GM12878 (cell line): ENCODE measurements at regions of chr1 and their contacts with region 1.

Region 1: GRCh38 chr1:160951443-160952128 is 3.0 kb downstream of the ITLN2 start:
- DNase-seq: peak; percentile 40
- ATAC-seq: peak; percentile 95
- H3K4me3 ChIP-seq: no peak overlapping the region
- H3K27ac ChIP-seq: no peak overlapping the region
- H3K4me1 ChIP-seq: no peaks in the 10 kb centered on the region
- H3K27me3 ChIP-seq: no peaks in the 10 kb centered on the region
- CTCF ChIP-seq: peak; percentile 80 to 90 (median 89)
- EP300 ChIP-seq: no peak
- POLR2A ChIP-seq: no peak
- RAD21 ChIP-seq: peak; percentile 89

Region 2: DNA sequence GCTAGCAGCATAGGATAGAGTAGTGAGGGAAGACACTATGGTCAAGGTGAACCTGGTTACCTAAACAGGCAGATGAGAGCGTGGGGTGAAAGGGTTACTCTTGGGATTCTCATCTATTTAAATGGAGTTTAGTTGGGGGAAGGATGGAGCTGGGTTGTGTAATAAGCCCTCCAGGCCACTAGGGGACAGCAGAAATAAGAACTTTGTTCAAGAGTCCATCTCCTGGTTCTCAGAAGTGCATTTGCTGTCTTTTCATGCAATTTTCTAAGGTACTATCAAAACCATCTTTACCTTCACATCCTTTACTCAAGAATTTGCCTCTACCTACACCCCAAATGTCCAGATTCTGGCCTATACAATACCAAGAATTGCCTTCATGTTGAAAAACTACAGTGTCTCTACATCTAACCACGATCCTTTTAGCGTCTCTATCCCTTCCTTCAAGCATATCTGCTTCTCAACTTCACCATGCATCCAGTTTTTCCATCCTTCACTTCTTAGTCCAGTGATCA is 332.8 kb before region 1 on chr1:
- CTCF ChIA-PET with region 1: interaction called, 13 read pairs
- POLR2A ChIA-PET with region 1: interaction called, 7 read pairs
- RAD21 ChIA-PET with region 1: interaction called, 3 read pairs
- SMC1A ChIA-PET with region 1: no interaction called
- in situ Hi-C with region 1: no loop called
- intact Hi-C with region 1: no loop called
- DNase-seq: no peak
- ATAC-seq: peak; percentile 54
- H3K4me3 ChIP-seq: no peak overlapping the region
- H3K27ac ChIP-seq: no peak overlapping the region; the same call in 1 of the 2 replicates
- H3K4me1 ChIP-seq: peaks cover 28% of the 10 kb centered on the region
- H3K27me3 ChIP-seq: no peaks in the 10 kb centered on the region
- CTCF ChIP-seq: peak; percentile 72 to 88 (median 82)
- EP300 ChIP-seq: no peak
- POLR2A ChIP-seq: no peak
- RAD21 ChIP-seq: peak; percentile 75

Region 3: DNA sequence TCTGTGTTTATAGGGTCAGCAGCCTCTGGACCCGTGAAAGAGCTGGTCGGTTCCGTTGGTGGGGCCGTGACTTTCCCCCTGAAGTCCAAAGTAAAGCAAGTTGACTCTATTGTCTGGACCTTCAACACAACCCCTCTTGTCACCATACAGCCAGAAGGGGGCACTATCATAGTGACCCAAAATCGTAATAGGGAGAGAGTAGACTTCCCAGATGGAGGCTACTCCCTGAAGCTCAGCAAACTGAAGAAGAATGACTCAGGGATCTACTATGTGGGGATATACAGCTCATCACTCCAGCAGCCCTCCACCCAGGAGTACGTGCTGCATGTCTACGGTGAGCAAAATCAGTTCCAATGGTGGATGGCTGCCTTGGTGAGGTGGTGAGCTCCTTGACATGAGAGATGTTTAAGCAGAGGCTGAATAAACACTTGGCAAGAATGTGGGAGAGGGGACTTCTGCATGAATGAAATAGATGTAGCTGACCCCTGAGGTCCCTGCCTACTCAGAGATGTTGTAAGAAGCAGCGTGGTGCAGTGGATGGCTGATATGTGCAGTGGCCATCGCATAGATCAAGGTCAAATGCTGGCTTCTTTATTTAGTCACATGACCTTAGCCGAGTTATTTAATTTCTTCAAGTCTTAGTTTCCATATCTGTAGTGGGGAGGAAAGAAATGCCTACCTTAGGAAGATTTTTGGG is 203.3 kb before region 1 on chr1:
- CTCF ChIA-PET with region 1: interaction called, 10 read pairs
- POLR2A ChIA-PET with region 1: no interaction called
- RAD21 ChIA-PET with region 1: interaction called, 5 read pairs
- SMC1A ChIA-PET with region 1: interaction called, 6 read pairs
- in situ Hi-C with region 1: no loop called
- intact Hi-C with region 1: no loop called
- DNase-seq: no peak
- ATAC-seq: no peak
- H3K4me3 ChIP-seq: no peak overlapping the region
- H3K27ac ChIP-seq: no peak overlapping the region
- H3K4me1 ChIP-seq: peaks cover 51% of the 10 kb centered on the region
- H3K27me3 ChIP-seq: no peaks in the 10 kb centered on the region
- CTCF ChIP-seq: peak; percentile 18 to 47 (median 38); a peak in 4 of 6 replicates
- EP300 ChIP-seq: no peak
- POLR2A ChIP-seq: no peak; the same call in 1 of the 2 replicates
- RAD21 ChIP-seq: no peak

Region 4: GRCh38 chr1:160795951-160796383 is 155.6 kb before region 1 on chr1 and contains the start of gene LY9:
- CTCF ChIA-PET with region 1: interaction called, 14 read pairs
- POLR2A ChIA-PET with region 1: no interaction called
- RAD21 ChIA-PET with region 1: interaction called, 24 read pairs
- SMC1A ChIA-PET with region 1: interaction called, 4 read pairs
- in situ Hi-C with region 1: no loop called
- intact Hi-C with region 1: no loop called
- DNase-seq: peak; percentile 97
- ATAC-seq: peak; percentile 79
- H3K4me3 ChIP-seq: peak within 1 kb of the TSS; percentile 63
- H3K27ac ChIP-seq: peak within 1 kb of the TSS; percentile 78
- H3K4me1 ChIP-seq: peaks cover 42% of the 10 kb centered on the region
- H3K27me3 ChIP-seq: no peaks in the 10 kb centered on the region
- CTCF ChIP-seq: no peak
- EP300 ChIP-seq: peak; percentile 96 to 98
- POLR2A ChIP-seq: peak; percentile 66
- RAD21 ChIP-seq: no peak
- polyA plus RNA-seq, gene LY9: 2.7 to 2.8 TPM

Region 5: DNA sequence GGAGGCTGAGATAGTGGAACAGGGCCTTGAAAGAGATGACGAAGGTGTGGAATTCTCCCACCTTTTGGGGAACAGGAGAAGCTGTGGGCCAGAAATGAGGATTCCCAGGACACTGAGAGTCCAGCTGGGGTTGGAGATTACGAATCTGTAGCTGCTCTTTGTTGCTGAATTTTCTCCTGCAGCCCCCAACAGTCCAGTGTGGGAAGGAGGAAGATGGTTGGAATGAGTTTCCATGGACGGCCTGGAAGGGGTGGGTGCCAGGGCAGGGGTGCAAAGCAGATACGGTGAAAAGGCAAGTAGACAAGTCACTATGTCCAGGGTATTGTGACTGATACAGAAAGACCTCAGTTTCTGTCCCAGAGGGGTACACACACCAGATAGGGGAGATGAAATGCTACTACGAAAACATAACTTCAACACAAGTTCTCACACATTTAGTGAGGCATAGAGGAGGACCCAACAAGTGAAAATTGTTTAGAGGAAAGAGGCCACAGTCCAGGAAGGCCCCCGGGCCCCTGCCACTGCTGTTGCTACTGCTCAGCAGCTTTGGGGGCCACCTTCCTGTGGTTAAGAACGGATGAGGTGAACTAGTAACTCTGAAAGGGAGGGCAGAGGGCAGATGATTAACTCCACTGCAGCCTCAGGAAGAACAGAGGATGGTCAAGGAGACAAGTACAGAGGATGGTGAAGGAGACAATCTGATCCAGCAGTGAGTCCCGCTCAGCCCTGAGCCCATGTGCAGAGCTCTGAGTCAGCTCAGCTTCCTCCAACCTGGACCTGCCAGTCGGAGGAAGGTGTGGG is 96.2 kb before region 1 on chr1:
- CTCF ChIA-PET with region 1: interaction called, 38 read pairs
- POLR2A ChIA-PET with region 1: interaction called, 7 read pairs
- RAD21 ChIA-PET with region 1: interaction called, 9 read pairs
- SMC1A ChIA-PET with region 1: interaction called, 41 read pairs
- in situ Hi-C with region 1: no loop called
- intact Hi-C with region 1: no loop called
- DNase-seq: peak; percentile 51
- ATAC-seq: peak; percentile 85
- H3K4me3 ChIP-seq: no peak overlapping the region
- H3K27ac ChIP-seq: no peak overlapping the region
- H3K4me1 ChIP-seq: peaks cover 14% of the 10 kb centered on the region
- H3K27me3 ChIP-seq: no peaks in the 10 kb centered on the region
- CTCF ChIP-seq: no peak
- EP300 ChIP-seq: no peak
- POLR2A ChIP-seq: no peak
- RAD21 ChIP-seq: no peak

Region 6: DNA sequence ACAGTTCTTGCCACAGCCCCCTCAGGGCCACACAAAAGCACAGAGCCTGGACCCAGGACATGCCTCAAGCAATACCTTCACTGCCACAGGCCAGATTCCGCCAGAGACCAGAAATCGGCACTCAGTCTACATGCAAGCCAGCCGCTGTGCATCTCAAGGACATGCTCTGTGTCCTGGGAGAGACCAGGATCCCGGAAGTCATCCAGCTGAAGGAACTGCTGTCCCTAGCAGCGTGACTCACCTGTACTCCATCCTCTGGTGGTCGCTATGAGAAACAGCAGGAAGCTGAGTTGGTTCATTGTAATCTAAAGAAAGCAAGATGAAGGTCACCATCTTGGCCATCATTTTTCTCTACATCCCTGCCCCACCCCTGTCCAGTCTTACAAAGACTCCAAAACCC is 67.0 kb before region 1 on chr1:
- CTCF ChIA-PET with region 1: interaction called, 56 read pairs
- POLR2A ChIA-PET with region 1: interaction called, 4 read pairs
- RAD21 ChIA-PET with region 1: interaction called, 3 read pairs
- SMC1A ChIA-PET with region 1: interaction called, 3 read pairs
- in situ Hi-C with region 1: no loop called
- intact Hi-C with region 1: no loop called
- DNase-seq: no peak
- ATAC-seq: peak; percentile 65
- H3K4me3 ChIP-seq: no peak overlapping the region
- H3K27ac ChIP-seq: no peak overlapping the region
- H3K4me1 ChIP-seq: no peaks in the 10 kb centered on the region
- H3K27me3 ChIP-seq: no peaks in the 10 kb centered on the region
- CTCF ChIP-seq: peak; percentile 10 to 54 (median 40); a peak in 3 of 6 replicates
- EP300 ChIP-seq: no peak
- POLR2A ChIP-seq: no peak
- RAD21 ChIP-seq: peak; percentile 41

Region 7: DNA sequence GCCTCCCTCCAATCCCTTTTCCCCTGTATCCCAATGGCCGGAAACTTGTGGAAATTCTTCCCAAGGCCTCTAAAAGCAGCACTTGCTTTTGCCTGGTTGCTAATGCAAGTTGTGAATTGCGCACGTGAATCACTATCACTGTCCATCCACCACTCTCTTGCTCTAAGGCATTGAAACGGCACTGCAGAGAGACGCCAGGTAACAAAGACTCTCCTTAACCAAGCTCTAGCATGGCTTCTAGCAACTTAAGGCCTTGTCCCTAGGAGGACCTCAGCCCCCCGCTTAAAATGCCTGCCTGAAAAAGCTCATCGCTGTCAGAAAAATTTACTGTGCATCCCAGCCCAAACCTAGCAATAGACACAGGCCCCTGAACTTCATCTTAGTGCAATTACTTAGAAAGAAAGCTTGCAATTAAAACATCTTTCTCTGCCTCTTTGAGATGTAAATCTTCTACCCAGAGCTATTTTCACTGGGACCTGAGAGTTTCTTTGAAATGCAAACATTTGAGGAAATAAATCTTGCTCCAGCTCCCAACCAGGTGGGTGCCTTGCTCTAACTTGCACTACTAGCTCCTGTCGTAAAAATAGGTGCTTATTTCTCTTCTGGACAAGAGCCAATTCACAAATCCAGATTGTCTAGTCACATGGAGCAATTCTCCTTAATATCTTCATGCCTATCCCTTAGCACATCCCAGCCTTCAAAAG is 35.9 kb after region 1 on chr1:
- CTCF ChIA-PET with region 1: interaction called, 136 read pairs
- POLR2A ChIA-PET with region 1: no interaction called
- RAD21 ChIA-PET with region 1: interaction called, 26 read pairs
- SMC1A ChIA-PET with region 1: interaction called, 19 read pairs
- in situ Hi-C with region 1: no loop called
- intact Hi-C with region 1: no loop called
- DNase-seq: no peak
- ATAC-seq: no peak
- H3K4me3 ChIP-seq: no peak overlapping the region
- H3K27ac ChIP-seq: no peak overlapping the region
- H3K4me1 ChIP-seq: no peaks in the 10 kb centered on the region; the same call in 1 of the 2 replicates
- H3K27me3 ChIP-seq: no peaks in the 10 kb centered on the region
- CTCF ChIP-seq: no peak
- EP300 ChIP-seq: no peak
- POLR2A ChIP-seq: no peak
- RAD21 ChIP-seq: no peak